ENCODE measurements at regions of chr13 and their contacts with region 1.

Region 1: GRCh38 chr13:109786457-109787134 is at the start of gene IRS2:
- DNase-seq: peak; percentile 85
- H3K4me3 ChIP-seq: peak within 1 kb of the TSS; percentile 51 to 78 (median 58)
- H3K27ac ChIP-seq: no peak within 1 kb of the TSS
- H3K4me1 ChIP-seq: peaks cover 3% of the 10 kb centered on the region
- H3K27me3 ChIP-seq: peaks cover 27 to 46% of the 10 kb centered on the region in 2 experiments
- CTCF ChIP-seq: no peak
- POLR2A ChIP-seq: peak; percentile 82
- total RNA-seq, gene IRS2: 4.4 and 5.9 TPM in 2 replicates

Region 2: DNA sequence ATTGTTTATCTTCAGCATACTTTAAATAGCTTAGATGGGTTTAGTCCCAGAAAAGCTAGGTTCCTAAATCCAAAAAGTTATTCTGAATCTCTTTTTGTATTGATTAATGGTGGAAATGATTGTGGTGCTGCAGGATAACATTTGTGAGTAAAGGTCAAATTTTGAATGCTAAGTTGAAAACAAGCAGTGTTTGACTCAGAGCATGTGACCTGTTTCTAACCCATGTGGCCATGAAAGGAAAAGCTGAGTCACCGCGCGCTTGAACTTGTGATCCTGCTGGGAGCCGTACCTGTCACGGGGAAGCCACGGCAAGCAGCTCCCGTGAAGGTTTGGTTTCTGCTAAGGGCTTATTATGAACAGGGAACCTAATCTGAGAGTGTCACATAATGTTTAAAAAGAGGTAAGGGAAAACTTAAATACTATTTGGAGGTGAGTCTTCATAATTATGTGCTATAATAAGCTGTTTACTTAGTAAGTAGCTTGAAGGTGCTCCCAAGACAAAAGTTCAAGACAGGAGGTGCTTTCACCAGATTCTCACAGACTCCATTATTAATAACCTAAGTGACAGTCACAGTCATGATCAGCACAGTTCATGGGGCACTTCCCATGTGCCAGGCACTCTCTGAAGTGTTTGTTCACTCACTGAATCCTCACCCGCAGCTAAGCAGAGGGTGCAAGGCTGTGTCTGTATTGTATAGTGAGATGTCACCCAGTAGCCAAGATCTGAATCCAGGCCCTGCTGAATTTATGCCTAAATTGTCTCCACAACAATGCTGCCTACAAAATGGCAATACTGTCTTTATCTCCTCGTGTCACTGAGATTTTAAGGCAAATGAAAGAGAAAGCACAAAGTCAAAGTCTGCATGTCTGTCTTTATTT is 870.7 kb before region 1 on chr13:
- CTCF ChIA-PET with region 1: interaction called, 14 read pairs
- POLR2A ChIA-PET with region 1: interaction called, 6 read pairs
- dilution Hi-C with region 1: no loop called
- intact Hi-C with region 1: loop called (anchors 1 kb)
- DNase-seq: peak; percentile 97
- H3K4me3 ChIP-seq: peak overlapping the region in 1 of 3 experiments; percentile 31
- H3K27ac ChIP-seq: peak overlapping the region; percentile 80
- H3K4me1 ChIP-seq: peaks cover 25% of the 10 kb centered on the region
- H3K27me3 ChIP-seq: no peaks in the 10 kb centered on the region
- CTCF ChIP-seq: no peak
- POLR2A ChIP-seq: no peak

Region 3: DNA sequence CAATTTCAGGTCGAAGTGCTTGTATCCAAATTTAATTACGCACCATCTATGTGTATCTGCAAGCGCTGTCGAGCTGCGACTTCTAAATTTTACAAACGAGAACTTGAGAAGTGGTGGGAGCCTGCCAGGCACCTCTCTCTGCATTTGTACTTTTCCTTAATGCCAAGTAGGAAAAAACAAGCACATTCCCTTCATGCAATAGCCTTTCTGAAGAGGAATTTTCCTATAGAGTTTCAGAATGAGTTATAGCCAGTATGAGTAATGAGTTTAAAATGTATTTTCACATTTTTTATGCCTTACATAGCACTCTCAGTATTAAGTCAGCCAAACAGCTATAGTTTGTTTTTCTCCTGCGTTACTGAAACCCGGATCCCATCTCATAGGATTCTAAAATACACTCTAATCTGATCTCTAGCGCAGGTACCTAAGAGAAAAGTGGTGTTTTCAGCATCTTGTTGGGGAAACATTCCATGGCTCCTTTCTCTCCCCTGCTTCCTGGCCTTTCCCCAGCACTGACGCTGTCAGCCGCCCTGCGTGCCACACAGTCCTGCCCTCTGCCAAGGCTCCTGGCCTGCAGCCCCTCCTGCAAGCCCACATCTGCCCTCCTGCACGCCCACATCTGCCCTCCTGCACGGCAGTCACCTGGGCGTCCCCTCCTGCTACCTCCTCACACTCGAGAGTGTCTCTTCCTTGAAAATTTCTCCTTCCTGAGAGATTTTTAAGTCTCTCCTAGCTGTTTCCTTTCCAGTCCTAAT is 630.2 kb before region 1 on chr13:
- CTCF ChIA-PET with region 1: interaction called, 3 read pairs
- POLR2A ChIA-PET with region 1: no interaction called
- dilution Hi-C with region 1: no loop called
- intact Hi-C with region 1: loop called (anchors 1 kb)
- DNase-seq: peak; percentile 91
- H3K4me3 ChIP-seq: no peak overlapping the region
- H3K27ac ChIP-seq: peak overlapping the region; percentile 87
- H3K4me1 ChIP-seq: peaks cover 39% of the 10 kb centered on the region
- H3K27me3 ChIP-seq: no peaks in the 10 kb centered on the region
- CTCF ChIP-seq: no peak
- POLR2A ChIP-seq: no peak

Region 4: DNA sequence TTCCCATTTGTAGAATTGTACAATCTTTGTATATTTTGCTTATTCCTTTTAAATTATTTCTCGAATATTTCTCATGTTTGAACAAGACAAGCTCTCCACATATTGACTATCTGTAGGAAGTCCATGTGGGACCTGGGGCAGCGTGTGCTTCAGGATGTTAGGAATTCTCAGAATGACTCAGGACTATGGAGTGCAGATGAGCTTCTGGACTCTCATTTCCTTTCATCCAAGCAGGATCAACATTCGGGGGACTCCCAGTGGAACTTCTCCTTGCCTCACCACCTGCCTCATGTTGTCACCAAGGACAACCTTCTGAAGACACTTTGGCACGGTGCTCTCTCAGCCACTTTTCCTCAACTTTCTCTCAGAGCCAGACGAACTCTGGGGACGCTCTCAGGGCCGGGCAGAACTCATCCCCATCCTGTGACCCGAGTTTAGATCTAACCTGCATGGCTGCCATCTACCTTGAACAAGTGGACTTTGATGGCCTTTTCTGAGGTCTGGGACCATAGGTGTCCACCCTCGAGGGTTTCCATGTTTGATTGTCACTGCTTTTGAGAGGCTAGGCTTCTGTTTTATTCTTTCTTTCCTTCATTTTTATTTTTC is 441.9 kb before region 1 on chr13:
- CTCF ChIA-PET with region 1: no interaction called
- POLR2A ChIA-PET with region 1: no interaction called
- dilution Hi-C with region 1: no loop called
- intact Hi-C with region 1: loop called (anchors 2 kb)
- DNase-seq: peak; percentile 67
- H3K4me3 ChIP-seq: no peak overlapping the region
- H3K27ac ChIP-seq: peak overlapping the region; percentile 90
- H3K4me1 ChIP-seq: peaks cover 40% of the 10 kb centered on the region
- H3K27me3 ChIP-seq: no peaks in the 10 kb centered on the region
- CTCF ChIP-seq: no peak
- POLR2A ChIP-seq: no peak

Region 5: DNA sequence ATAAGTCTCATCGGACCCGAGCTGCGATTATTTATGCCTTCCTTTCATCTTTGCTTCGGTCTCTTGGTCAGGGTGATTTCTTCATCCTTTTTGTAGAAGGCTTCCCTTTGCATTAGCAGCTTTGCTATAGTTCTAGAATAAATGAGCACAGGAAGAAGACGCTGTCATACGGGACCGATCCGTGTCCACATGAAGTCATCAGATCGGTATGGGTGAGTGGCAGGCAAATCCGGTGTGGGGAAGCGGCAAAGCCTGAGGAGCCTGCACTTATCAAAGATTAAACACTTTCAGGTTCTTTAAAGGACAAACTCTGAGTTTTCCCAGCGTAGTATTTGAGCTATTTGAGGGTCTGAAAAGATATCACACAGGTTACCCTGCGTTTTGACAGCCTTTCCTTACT is 119.5 kb before region 1 on chr13:
- CTCF ChIA-PET with region 1: interaction called, 3 read pairs
- POLR2A ChIA-PET with region 1: no interaction called
- dilution Hi-C with region 1: no loop called
- intact Hi-C with region 1: loop called (anchors 5 kb)
- DNase-seq: no peak
- H3K4me3 ChIP-seq: no peak overlapping the region
- H3K27ac ChIP-seq: no peak overlapping the region
- H3K4me1 ChIP-seq: no peaks in the 10 kb centered on the region
- H3K27me3 ChIP-seq: peaks cover 6 to 22% of the 10 kb centered on the region in 2 experiments
- CTCF ChIP-seq: no peak
- POLR2A ChIP-seq: no peak

Region 6: DNA sequence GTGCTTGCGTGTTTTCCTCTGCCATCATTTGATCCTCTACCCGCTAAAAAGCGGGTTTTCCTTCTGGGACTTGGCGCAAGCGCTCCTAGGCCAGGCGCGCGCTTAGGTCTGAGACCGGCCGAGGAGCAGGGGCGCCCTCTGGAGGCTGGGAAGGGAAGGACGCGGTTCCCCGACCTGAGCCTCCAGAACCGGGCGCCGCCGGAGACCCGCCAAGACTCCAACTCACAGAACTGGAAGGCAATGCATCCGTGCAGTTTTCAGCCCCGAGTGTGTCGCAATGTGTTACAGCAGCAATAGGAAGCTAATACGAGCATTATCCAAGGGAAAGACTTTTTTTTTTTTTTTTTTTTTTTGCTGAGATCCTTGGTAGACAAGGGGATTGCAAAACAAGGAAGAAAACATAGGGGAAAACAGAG is 329.5 kb after region 1 on chr13:
- CTCF ChIA-PET with region 1: no interaction called
- POLR2A ChIA-PET with region 1: no interaction called
- dilution Hi-C with region 1: no loop called
- intact Hi-C with region 1: loop called (anchors 2 kb)
- DNase-seq: peak; percentile 59
- H3K4me3 ChIP-seq: no peak overlapping the region
- H3K27ac ChIP-seq: no peak overlapping the region
- H3K4me1 ChIP-seq: no peaks in the 10 kb centered on the region
- H3K27me3 ChIP-seq: peaks cover 17 to 22% of the 10 kb centered on the region in 2 experiments
- CTCF ChIP-seq: peak; percentile 92 to 97
- POLR2A ChIP-seq: no peak